Activated CD4-positive, alpha-beta memory T cell treated with anti-CD3 and anti-CD28 coated beads for 36 hours (primary cell): ENCODE measurements at regions of chr14 and their contacts with region 1.

Region 1: DNA sequence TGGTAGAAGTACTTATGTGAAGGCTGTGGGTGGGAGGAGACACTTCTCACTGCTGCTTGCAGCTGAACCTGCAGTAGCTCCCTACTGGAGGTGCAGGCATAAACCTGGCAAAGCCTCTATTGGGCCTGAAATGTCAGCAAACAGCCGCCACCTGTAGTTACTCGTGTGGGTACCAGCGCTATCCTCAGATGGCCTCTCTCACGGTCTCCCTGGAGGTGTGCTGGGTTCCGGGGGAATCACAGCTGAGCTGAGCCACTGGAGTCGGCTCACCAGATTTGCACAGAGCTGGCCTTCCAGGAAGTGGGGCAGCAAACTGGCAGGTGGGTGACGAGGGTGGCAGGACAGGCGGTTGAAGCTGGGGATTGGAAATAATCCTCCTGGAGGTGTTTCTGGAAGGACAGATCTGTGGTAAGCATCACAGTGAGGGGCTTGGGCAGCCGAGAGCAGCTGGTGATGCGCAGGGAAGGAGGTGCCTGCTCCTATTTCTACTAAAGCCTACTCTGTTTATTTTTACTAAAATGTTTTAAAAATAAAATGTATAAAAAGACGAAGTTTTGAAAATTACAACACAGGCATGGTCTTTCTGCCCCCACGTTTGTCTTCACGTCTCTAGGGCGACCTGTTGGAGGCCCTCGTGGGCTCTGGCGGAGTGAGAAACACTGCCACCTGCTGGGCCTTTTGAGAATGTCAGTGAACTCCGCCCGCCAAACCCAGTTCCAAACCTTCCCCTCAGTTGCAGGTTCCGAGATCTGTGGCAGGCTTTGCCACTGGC is 67.8 kb upstream of the PLEKHG3 start:
- DNase-seq: peak; percentile 82
- H3K4me3 Mint-ChIP-seq: no peak overlapping the region
- H3K27ac Mint-ChIP-seq: no peak overlapping the region
- H3K4me1 Mint-ChIP-seq: no peaks in the 10 kb centered on the region
- H3K27me3 Mint-ChIP-seq: peaks cover 2% of the 10 kb centered on the region

Region 2: DNA sequence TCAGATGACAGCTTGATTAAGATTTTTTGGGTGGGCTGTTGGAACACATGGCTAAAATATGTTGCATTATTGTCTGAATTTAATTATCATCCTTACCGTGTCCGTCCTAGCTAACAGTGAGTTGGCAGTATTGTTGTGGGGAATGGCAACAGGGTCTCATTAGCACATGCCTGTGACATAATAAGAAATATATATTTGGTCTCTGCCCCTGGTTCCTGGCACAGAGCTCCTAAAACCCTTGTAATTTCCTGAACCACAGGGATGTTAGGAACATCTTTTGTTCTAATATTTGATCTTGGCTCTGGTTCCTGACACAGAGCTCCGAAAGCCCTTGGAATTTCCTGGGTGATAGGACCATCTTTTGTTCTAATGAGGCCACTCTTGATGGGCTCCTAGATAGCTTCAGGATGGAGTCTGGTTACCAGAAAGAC is 707.6 kb before region 1 on chr14:
- CTCF ChIA-PET with region 1: no interaction called
- POLR2A ChIA-PET with region 1: no interaction called
- intact Hi-C with region 1: no loop called
- DNase-seq: no peak
- H3K4me3 Mint-ChIP-seq: no peak overlapping the region
- H3K27ac Mint-ChIP-seq: no peak overlapping the region
- H3K4me1 Mint-ChIP-seq: peaks cover 28% of the 10 kb centered on the region
- H3K27me3 Mint-ChIP-seq: no peaks in the 10 kb centered on the region

Region 3: GRCh38 chr14:64338616-64339316 is 297.6 kb before region 1 on chr14:
- CTCF ChIA-PET with region 1: interaction called, 44 read pairs
- POLR2A ChIA-PET with region 1: no interaction called
- intact Hi-C with region 1: no loop called
- DNase-seq: peak; percentile 93
- H3K4me3 Mint-ChIP-seq: peak overlapping the region; percentile 91
- H3K27ac Mint-ChIP-seq: peak overlapping the region; percentile 95
- H3K4me1 Mint-ChIP-seq: peaks cover 23% of the 10 kb centered on the region
- H3K27me3 Mint-ChIP-seq: no peaks in the 10 kb centered on the region

Region 4: DNA sequence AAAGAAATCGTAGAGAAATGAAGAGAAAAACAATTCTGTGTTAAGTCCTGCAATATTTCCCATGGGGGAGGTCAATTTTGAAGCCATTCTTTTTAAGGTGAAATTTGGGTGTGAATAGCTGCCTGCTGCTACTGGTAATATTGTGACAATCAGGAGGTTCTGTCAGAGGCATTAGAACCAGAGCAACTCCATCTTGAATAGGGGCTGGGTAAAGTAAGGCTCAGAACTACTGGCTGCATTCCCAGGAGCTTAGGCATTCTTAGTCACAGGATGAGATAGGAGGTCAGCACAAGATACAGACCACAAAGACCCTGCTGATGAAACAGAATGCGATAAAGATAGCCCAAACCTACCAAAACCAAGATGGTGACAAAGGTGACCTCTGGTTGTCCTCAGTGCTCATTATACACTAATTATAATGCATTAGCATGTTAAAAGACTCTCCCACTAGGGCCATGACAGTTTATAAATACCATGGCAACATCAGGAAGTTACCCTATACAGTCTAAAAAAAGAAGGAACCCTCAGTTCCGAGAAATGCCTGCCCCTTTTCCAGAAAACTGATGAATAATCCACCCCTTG is 273.0 kb before region 1 on chr14:
- CTCF ChIA-PET with region 1: no interaction called
- POLR2A ChIA-PET with region 1: no interaction called
- intact Hi-C with region 1: no loop called
- DNase-seq: no peak
- H3K4me3 Mint-ChIP-seq: no peak overlapping the region
- H3K27ac Mint-ChIP-seq: no peak overlapping the region
- H3K4me1 Mint-ChIP-seq: no peaks in the 10 kb centered on the region
- H3K27me3 Mint-ChIP-seq: no peaks in the 10 kb centered on the region

Region 5: GRCh38 chr14:64478634-64479250 is 157.7 kb before region 1 on chr14:
- CTCF ChIA-PET with region 1: interaction called, 10 read pairs
- POLR2A ChIA-PET with region 1: no interaction called
- intact Hi-C with region 1: no loop called
- DNase-seq: no peak
- H3K4me3 Mint-ChIP-seq: no peak overlapping the region
- H3K27ac Mint-ChIP-seq: no peak overlapping the region
- H3K4me1 Mint-ChIP-seq: peaks cover 36% of the 10 kb centered on the region
- H3K27me3 Mint-ChIP-seq: no peaks in the 10 kb centered on the region

Region 6: GRCh38 chr14:64540208-64541157 is 95.9 kb before region 1 on chr14 and contains the start of gene HSPA2:
- CTCF ChIA-PET with region 1: interaction called, 20 read pairs
- POLR2A ChIA-PET with region 1: no interaction called
- intact Hi-C with region 1: loop called (anchors 2 kb)
- DNase-seq: peak; percentile 98
- H3K4me3 Mint-ChIP-seq: peak within 1 kb of the TSS; percentile 89
- H3K27ac Mint-ChIP-seq: peak within 1 kb of the TSS; percentile 84
- H3K4me1 Mint-ChIP-seq: peaks cover 35% of the 10 kb centered on the region
- H3K27me3 Mint-ChIP-seq: peaks cover 24% of the 10 kb centered on the region
- total RNA-seq, gene HSPA2: 6.6 to 6.7 TPM

Region 7: GRCh38 chr14:64625475-64626269 is 10.7 kb before region 1 on chr14:
- CTCF ChIA-PET with region 1: interaction called, 36 read pairs
- POLR2A ChIA-PET with region 1: no interaction called
- intact Hi-C with region 1: no loop called
- DNase-seq: no peak
- H3K4me3 Mint-ChIP-seq: no peak overlapping the region
- H3K27ac Mint-ChIP-seq: no peak overlapping the region
- H3K4me1 Mint-ChIP-seq: no peaks in the 10 kb centered on the region
- H3K27me3 Mint-ChIP-seq: no peaks in the 10 kb centered on the region

Region 8: DNA sequence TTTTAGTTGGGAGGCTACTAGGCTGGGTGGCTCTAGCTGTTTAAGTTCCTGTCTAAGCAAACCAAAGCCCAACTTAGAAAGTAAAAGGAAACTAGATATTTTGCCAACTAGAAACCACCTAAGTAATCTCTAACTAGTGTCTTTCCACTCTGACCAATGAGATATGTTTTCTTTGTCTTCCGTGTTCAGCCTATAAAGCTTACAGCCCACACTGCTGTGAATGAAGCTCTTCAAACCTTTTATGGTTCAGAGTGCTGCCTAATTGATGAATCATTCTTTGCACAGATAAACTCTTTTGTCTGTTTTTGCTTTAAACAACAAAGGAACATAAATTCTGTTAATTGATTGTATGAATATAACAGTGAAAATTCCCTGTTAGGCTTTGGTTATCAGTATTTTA is 842.2 kb after region 1 on chr14:
- CTCF ChIA-PET with region 1: no interaction called
- POLR2A ChIA-PET with region 1: no interaction called
- intact Hi-C with region 1: no loop called
- DNase-seq: no peak
- H3K4me3 Mint-ChIP-seq: no peak overlapping the region
- H3K27ac Mint-ChIP-seq: no peak overlapping the region
- H3K4me1 Mint-ChIP-seq: peaks cover 70% of the 10 kb centered on the region
- H3K27me3 Mint-ChIP-seq: no peaks in the 10 kb centered on the region